GM10248 (cell line): ENCODE measurements at regions of chr16 and their contacts with region 1.

Region 1: GRCh38 chr16:56931892-56932720 is at the start of gene HERPUD1:
- DNase-seq: peak; percentile 99
- CTCF ChIP-seq: no peak

Region 2: GRCh38 chr16:56851671-56852400 is 80.3 kb before region 1 on chr16:
- CTCF ChIA-PET with region 1: no interaction called
- POLR2A ChIA-PET with region 1: no interaction called
- DNase-seq: no peak
- CTCF ChIP-seq: peak; percentile 20

Region 3: DNA sequence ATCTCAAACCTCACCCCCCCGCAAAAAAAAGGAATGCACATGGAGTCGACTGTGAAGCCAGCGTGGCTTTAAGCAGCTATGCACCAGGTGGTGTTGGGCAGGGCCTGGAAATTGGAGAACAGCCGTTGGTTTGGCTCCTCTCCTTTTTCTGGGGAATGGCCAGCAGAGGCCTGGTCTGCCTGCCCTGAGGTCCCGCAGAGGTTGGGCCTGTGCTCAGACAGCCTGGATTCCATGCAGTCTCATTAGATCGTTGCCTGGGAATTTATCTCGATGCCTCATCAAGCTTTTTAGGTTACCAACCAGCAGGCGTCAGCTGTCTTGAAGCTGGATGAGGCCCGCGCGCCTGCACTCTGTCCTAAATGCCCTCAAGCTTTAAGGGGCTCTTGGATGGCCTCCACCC is 57.3 kb before region 1 on chr16:
- CTCF ChIA-PET with region 1: interaction called, 3 read pairs
- POLR2A ChIA-PET with region 1: interaction called, 13 read pairs
- DNase-seq: no peak
- CTCF ChIP-seq: no peak

Region 4: GRCh38 chr16:56911771-56912571 is 20.1 kb before region 1 on chr16:
- CTCF ChIA-PET with region 1: interaction called, 7 read pairs
- POLR2A ChIA-PET with region 1: interaction called, 60 read pairs
- DNase-seq: peak; percentile 83
- CTCF ChIP-seq: no peak

Region 5: DNA sequence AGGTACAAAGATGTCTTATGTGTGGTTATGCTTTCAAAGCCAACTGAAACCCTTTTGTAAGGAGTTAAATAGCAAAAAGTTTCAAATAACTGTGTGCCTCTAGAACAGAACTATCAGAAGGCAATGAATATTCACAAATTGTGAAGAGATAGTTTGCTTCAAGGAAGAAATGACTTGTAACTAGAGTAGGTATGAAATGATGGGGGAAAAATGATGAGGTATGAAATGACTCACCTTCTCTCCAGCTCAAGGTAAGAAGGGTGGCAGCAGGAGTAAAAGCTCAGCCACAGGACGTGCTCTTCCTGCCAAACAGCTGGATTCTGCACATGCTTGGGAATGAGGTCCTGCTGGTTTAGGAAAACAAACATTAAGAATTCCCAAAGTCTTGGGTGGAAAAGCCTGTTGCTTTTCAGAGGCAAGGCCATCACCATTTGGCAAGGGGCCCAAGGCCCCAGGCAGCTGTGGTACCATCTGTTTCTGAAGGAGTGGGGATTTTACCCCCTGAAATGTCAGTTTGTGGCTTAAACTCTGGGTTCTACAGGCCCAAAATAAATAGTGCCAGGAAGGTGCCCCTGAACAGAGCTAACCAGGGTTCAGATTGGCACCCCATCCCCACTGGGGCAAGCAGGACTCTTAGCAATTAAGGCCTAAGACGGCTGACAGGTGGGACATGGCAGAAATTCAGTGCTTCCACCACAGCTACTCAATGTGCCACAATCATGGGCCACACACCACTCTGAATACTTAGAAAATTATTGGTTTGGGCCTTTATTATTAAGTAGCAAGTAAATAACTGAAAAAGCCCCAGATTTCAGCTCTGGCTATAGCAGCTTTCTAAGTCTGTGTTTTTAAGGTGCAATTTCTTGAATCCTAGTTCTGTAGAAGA is 13.1 kb after region 1 on chr16:
- CTCF ChIA-PET with region 1: interaction called, 5 read pairs
- POLR2A ChIA-PET with region 1: interaction called, 27 read pairs
- DNase-seq: no peak
- CTCF ChIP-seq: no peak

Region 6: DNA sequence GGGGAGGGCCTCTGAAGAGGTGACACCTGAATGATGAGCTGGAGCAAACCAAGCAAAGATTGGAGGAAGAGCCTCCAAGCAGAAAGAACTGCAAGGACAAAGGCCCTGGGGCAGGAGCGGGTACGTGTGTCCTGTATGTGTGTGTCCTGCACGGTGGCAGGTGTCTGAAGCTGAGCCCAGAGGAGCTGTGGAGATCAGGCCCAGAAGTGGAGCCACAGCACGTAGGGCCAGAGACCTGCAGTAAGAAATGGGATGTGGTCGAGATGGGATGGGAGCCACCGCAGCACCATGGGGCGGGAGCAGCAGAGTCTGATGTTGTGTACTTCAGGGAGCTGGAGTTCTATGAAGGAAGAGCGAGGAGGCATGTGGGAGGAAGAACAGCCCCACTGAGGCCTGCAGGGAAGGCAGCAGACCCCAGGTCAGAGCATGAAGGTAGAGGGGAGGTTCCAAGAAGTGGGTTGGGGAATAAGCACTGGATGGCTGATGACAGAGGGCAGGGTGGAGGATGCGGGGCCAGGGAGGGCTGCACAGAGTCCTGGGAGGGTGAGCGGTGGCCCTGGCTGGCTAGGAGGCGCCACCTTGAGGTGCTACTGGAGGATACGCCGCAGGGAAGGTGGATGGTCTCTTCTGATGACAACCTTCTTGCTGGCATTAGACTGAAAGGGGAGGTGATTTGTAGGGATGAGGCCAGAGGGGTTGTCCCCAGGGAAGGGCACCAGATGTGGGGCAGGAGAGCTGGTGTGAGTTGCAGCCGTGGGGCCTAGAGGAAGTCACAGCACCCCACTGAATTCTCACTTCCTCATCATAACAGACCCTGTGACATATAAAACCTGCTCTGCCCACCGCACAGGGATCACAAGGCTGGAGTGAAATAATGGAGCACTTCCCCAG is 19.0 kb after region 1 on chr16:
- CTCF ChIA-PET with region 1: interaction called, 5 read pairs
- POLR2A ChIA-PET with region 1: interaction called, 25 read pairs
- DNase-seq: peak; percentile 78
- CTCF ChIP-seq: peak; percentile 75